ENCODE measurements at regions of chr1 and their contacts with region 1.

Region 1: GRCh38 chr1:91929250-91929649 is 20.0 kb upstream of the BRDT start:
- DNase-seq: no peak
- ATAC-seq: no peak
- H3K4me3 ChIP-seq: no peak overlapping the region
- H3K4me3 Mint-ChIP-seq: no peak overlapping the region
- H3K27ac ChIP-seq: no peak overlapping the region
- H3K27ac Mint-ChIP-seq: no peak overlapping the region
- H3K4me1 ChIP-seq: no peaks in the 10 kb centered on the region
- H3K4me1 Mint-ChIP-seq: no peaks in the 10 kb centered on the region
- H3K27me3 ChIP-seq: no peaks in the 10 kb centered on the region
- H3K27me3 Mint-ChIP-seq: no peaks in the 10 kb centered on the region
- CTCF ChIP-seq: no peak

Region 2: GRCh38 chr1:90579212-90579802 is 1349.9 kb before region 1 on chr1:
- CTCF ChIA-PET with region 1: no interaction called
- POLR2A ChIA-PET with region 1: no interaction called
- intact Hi-C with region 1: loop called in 1 of 2 experiments (anchors 5 kb)
- DNase-seq: peak in 2 of 9 experiments; percentile 37 to 50
- ATAC-seq: no peak
- H3K4me3 ChIP-seq: no peak overlapping the region
- H3K4me3 Mint-ChIP-seq: no peak overlapping the region
- H3K27ac ChIP-seq: no peak overlapping the region
- H3K27ac Mint-ChIP-seq: no peak overlapping the region
- H3K4me1 ChIP-seq: no peaks in the 10 kb centered on the region
- H3K4me1 Mint-ChIP-seq: no peaks in the 10 kb centered on the region
- H3K27me3 ChIP-seq: peaks cover 2 to 3% of the 10 kb centered on the region in 2 experiments
- H3K27me3 Mint-ChIP-seq: no peaks in the 10 kb centered on the region
- CTCF ChIP-seq: peak; percentile 56

Region 3: DNA sequence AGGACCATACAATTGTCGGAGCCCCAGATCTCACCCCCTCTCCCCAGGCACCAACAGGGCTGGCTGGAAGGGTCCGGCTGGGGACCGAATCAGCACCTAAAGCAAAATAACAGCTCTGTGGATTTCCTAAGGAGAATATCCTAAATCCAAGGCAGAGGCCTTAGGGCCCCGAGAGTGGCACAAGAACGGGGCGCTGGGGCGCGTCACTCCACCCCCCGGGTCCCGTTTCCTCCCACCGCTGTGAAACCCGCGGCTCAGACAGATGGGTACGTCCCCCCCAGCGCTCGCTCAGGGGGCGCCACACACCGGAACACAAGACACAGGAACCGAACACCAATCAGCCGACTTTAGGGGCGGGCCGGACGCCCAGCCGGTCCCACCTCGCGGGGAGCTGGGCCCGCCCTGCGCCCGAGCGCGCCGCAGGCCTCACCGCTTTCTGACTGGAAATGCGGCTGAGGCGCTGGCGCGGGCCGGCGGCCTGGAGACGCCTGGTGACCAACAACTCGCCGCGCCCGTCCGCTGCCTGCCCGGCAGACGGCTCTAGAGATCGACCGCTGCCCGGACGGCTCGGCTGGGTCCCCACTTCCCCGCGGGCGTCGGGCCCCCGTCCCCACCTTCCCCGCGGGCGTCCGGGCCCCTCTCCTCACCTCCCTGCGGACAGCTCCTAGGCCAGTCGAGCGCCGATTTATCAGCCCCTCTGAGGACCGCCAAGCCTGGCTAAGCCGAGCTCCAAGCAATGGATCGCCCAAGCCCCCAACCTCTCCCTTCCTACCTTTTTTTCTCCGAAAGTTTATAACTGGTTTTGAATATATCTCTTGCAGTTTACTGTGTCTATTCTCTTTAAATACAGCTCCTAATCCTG is 524.9 kb before region 1 on chr1 and contains the start of gene HFM1:
- CTCF ChIA-PET with region 1: interaction called, 3 read pairs
- POLR2A ChIA-PET with region 1: no interaction called
- intact Hi-C with region 1: loop called (anchors 1 to 5 kb)
- DNase-seq: peak; percentile 21 to 83 (median 61)
- ATAC-seq: peak; percentile 99
- H3K4me3 ChIP-seq: peak within 1 kb of the TSS; percentile 41 to 54
- H3K4me3 Mint-ChIP-seq: peak within 1 kb of the TSS; percentile 80
- H3K27ac ChIP-seq: no peak within 1 kb of the TSS
- H3K27ac Mint-ChIP-seq: peak within 1 kb of the TSS; percentile 66
- H3K4me1 ChIP-seq: peaks cover 7% of the 10 kb centered on the region
- H3K4me1 Mint-ChIP-seq: peaks cover 11% of the 10 kb centered on the region
- H3K27me3 ChIP-seq: no peaks in the 10 kb centered on the region
- H3K27me3 Mint-ChIP-seq: peaks cover 34% of the 10 kb centered on the region
- CTCF ChIP-seq: no peak
- total RNA-seq, gene HFM1: not detected

Region 4: GRCh38 chr1:91617285-91617765 is 311.9 kb before region 1 on chr1:
- CTCF ChIA-PET with region 1: interaction called, 3 read pairs
- POLR2A ChIA-PET with region 1: no interaction called
- intact Hi-C with region 1: loop called (anchors 5 to 10 kb)
- DNase-seq: peak in 3 of 9 experiments; percentile 12 to 35 (median 31)
- ATAC-seq: no peak
- H3K4me3 ChIP-seq: no peak overlapping the region
- H3K4me3 Mint-ChIP-seq: no peak overlapping the region
- H3K27ac ChIP-seq: no peak overlapping the region
- H3K27ac Mint-ChIP-seq: no peak overlapping the region
- H3K4me1 ChIP-seq: no peaks in the 10 kb centered on the region
- H3K4me1 Mint-ChIP-seq: no peaks in the 10 kb centered on the region
- H3K27me3 ChIP-seq: no peaks in the 10 kb centered on the region
- H3K27me3 Mint-ChIP-seq: no peaks in the 10 kb centered on the region
- CTCF ChIP-seq: no peak

Region 5: DNA sequence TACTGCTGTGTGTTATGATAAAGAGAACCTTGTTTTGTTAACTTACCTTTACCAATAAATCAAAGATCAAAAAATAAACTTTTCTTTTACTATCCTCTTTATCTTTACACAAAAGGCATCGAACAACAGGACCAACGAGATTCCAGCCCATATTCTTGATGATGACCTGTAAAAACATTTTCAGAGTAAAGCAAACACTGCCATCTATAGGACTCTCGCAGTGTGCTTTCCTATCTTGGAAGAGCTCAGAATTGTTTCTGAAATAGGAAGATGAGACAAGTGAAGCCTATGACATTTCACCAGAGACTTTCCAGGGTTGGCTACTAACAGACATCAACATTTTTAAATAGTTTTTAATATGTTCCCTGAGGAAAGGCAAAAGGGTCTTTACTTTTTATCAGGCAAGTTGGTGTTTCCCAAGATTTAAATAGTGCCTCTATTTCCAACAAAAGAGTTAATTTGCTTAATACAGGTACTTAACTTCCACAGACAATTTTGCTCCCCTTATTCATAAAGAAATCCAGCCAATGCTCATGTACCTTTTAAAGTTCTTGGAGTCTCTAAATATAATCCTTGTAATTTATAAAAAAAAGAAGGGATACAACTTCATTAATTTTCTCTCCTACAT is 362.2 kb after region 1 on chr1:
- CTCF ChIA-PET with region 1: interaction called, 3 read pairs
- POLR2A ChIA-PET with region 1: no interaction called
- intact Hi-C with region 1: loop called in 1 of 2 experiments (anchors 5 kb)
- DNase-seq: peak in 2 of 9 experiments; percentile 44 to 53
- ATAC-seq: peak; percentile 36
- H3K4me3 ChIP-seq: no peak overlapping the region
- H3K4me3 Mint-ChIP-seq: no peak overlapping the region
- H3K27ac ChIP-seq: no peak overlapping the region
- H3K27ac Mint-ChIP-seq: no peak overlapping the region
- H3K4me1 ChIP-seq: no peaks in the 10 kb centered on the region
- H3K4me1 Mint-ChIP-seq: peaks cover 30% of the 10 kb centered on the region
- H3K27me3 ChIP-seq: no peaks in the 10 kb centered on the region
- H3K27me3 Mint-ChIP-seq: no peaks in the 10 kb centered on the region
- CTCF ChIP-seq: peak; percentile 49